Thyroid gland (tissue), 4 donors: ENCODE measurements at regions of chr20 and their contacts with region 1.

Region 1: DNA sequence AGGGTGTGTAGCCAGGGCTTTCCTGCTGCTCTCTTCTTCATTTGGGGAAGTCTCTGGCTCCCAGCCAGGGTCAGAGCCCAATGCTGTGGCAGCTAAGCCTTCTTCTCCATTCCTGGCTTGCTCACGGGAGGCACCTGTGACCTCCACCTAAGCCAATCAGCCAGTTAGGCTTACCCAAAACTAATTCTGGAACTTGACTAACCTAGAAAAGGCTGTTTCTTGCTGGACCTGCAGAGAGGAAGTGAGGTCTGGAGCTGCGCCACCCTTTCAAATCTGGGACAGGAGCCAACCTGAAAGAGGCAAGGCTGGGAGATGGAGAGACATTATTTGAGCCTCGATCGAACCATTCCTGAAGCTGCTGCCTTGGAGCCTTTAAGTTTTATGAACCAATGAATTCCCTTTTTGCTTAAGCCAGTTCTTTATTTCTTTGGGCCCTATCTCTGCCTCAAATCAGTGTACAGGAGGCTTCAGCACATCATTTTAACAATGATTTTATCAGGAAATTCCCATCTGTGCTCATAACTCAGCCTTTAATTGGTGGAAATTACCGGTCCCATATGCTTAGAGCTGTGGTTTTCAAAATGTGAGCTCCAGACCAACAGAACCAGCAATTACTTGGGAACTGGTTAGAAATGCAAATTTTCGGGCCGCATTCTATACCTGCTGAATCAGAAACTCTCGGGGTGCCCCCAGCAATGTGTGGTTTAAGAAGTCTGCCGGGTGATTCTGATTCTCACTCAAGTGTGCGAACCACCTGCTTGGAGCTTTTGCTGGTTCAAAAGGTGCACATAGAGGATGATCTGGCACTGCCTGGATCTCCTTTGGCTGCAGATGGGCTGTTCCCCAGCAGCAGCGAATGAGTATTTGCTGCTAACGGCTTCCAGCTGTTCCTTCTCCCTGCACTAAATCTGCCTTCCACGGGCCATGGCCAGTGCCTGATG is 97.4 kb upstream of the RNF24 start:
- DNase-seq: peak; percentile 55 to 63
- H3K4me3 ChIP-seq: no peak overlapping the region
- H3K27ac ChIP-seq: no peak overlapping the region
- H3K4me1 ChIP-seq: peaks cover 0 to 7% of the 10 kb centered on the region in 2 donors
- H3K27me3 ChIP-seq: no peaks in the 10 kb centered on the region
- CTCF ChIP-seq: no peak
- POLR2A ChIP-seq: no peak

Region 2: DNA sequence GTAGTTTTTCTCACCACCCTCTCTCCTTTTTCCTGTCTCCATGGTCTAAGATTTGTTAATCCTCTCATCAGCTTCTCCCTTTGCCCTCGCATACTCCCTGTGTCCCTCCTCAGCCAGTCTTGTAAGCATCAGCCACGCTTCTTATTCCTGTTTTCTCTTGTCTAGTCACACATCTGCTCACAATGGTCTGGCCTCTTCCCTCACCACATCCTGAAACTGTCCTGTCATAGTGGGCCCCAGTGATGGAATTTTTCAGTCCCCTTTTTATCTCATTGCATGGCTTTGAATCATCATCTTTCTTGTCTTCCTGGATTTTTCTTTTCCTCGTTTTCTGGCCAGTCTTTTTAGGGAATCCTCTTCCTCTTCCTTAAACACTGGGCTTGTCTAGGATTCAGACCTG is 506.7 kb before region 1 on chr20:
- intact Hi-C with region 1: no loop called
- DNase-seq: no peak
- H3K4me3 ChIP-seq: no peak overlapping the region
- H3K27ac ChIP-seq: no peak overlapping the region
- H3K4me1 ChIP-seq: peaks cover 0 to 3% of the 10 kb centered on the region in 2 donors
- H3K27me3 ChIP-seq: no peaks in the 10 kb centered on the region
- CTCF ChIP-seq: no peak
- POLR2A ChIP-seq: no peak

Region 3: DNA sequence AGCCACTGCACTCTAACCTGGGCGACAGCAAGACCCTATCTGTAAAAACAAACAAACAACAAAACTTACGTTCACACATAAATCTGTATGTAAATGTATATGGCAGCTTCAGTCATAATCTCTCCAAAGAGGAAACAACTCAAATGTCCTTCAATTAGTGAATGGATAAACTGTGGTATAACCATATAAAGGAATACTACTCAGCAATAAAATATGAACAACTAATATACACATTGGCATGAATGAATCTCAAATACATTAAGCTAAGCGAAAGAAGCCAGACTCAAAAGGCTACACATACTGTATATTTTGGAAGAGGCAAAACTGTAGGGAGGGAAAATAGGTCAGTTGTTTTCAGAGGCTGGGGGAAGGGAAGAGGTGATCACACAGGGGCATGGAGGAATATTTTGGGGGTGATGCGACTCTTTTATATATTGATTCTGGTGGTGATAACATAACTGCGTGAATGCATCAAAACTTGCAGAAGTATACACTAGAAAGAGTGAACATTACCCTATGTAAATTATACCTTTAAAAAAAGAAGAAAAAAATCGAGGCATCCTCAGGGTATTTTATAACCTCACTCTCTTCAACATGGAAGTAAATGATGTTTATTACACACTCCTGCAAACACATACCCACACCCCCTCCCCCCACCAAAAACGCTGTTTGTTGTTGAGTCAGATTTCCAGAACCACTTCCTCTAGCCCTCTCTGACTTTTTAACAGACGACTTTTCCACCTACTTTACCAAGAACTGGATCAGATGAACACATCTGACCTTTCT is 17.8 kb after region 1 on chr20:
- intact Hi-C with region 1: no loop called
- DNase-seq: no peak
- H3K4me3 ChIP-seq: no peak overlapping the region
- H3K27ac ChIP-seq: no peak overlapping the region
- H3K4me1 ChIP-seq: no peaks in the 10 kb centered on the region
- H3K27me3 ChIP-seq: no peaks in the 10 kb centered on the region
- CTCF ChIP-seq: no peak
- POLR2A ChIP-seq: no peak

Region 4: DNA sequence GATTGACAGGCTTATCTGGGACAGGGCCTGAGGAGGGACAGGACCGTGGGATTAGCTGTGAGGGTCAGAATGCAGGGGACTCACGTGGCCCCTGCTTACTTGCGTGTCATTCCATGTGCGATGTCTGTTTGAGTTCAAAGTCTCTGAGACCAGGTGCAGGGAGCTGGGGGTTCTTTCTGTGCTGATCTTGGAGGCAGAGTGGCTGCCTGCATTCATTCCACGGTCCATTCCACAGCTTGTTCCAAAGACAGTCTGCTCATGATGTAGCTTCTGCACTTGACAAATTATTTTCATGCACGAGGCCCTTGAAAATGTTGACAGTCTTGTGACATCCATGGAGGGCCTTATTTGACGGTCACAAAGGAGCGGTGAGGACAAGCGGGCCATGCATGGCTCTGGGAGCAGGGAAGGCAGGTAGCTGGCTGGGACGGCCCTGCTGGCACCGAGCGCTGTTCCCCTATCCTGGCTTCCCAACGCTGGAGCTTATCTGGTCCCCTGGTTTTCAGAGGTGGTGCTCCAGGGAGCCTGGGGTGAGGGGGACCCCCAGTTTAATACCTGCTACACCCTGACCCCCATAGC is 58.9 kb after region 1 on chr20:
- intact Hi-C with region 1: loop called (anchors 2 kb)
- DNase-seq: no peak
- H3K4me3 ChIP-seq: no peak overlapping the region
- H3K27ac ChIP-seq: peak overlapping the region in 2 of 3 donors; percentile 15 to 62
- H3K4me1 ChIP-seq: peaks cover 0 to 7% of the 10 kb centered on the region in 2 donors
- H3K27me3 ChIP-seq: no peaks in the 10 kb centered on the region
- CTCF ChIP-seq: no peak
- POLR2A ChIP-seq: no peak

Region 5: GRCh38 chr20:4592316-4593148 is 479.8 kb after region 1 on chr20:
- intact Hi-C with region 1: loop called (anchors 5 kb)
- DNase-seq: peak; percentile 59 to 65
- H3K4me3 ChIP-seq: peak overlapping the region; percentile 10 to 46 (median 22)
- H3K27ac ChIP-seq: peak overlapping the region in 1 of 3 donors; percentile 43
- H3K4me1 ChIP-seq: peaks cover 0 to 8% of the 10 kb centered on the region in 2 donors
- H3K27me3 ChIP-seq: no peaks in the 10 kb centered on the region
- CTCF ChIP-seq: peak; percentile 52 to 98 (median 90)
- POLR2A ChIP-seq: no peak